ENCODE measurements at regions of chr20 and their contacts with region 1.

Region 1: GRCh38 chr20:25299806-25300205 is 51.9 kb downstream of the PYGB start:
- DNase-seq: no peak
- ATAC-seq: peak; percentile 11
- H3K4me3 ChIP-seq: no peak overlapping the region
- H3K27ac ChIP-seq: peak overlapping the region; percentile 78
- H3K4me1 ChIP-seq: peaks cover 70% of the 10 kb centered on the region
- H3K27me3 ChIP-seq: no peaks in the 10 kb centered on the region
- CTCF ChIP-seq: no peak

Region 2: DNA sequence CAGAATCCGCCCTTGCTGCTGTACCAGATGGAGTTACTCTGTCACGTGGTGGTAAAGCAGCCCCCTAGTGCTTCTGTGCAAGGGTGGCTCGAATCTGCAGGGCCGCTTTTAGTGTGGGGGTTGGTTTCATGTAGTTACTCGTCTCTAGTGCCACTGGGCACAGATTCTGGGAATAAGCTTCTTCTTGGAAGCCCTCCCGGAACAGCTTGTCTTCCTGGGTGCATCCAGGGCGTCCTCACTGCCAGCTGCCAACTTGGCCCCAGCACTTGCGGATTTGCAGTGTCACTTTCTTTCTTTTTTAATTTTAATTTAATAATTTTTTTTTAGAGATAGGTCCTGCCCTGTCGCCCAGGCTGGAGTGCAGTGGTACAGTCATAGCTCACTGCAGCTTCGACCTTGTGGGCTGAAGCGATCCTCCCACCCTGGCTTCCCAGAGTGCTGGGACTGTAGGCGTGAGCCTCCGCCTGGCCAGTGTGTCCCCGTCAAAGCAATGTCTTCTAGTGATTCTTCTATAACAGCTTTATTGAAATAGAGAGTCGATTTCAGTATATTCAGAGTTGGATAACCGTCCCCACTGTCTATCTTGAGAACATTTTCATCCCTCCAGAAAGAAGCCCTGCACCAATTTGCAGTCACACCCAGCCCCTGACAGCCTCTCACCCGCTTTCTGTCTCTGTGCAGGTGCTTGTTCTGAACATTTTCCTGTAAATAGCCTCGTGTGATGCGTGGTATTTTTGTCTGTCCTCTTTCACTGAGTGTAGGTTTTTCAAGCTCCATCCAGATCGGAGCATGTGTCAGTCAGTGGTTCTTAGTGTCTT is 26.1 kb before region 1 on chr20:
- CTCF ChIA-PET with region 1: no interaction called
- POLR2A ChIA-PET with region 1: interaction called, 13 read pairs
- in situ Hi-C with region 1: no loop called
- intact Hi-C with region 1: no loop called
- DNase-seq: no peak
- ATAC-seq: no peak
- H3K4me3 ChIP-seq: no peak overlapping the region
- H3K27ac ChIP-seq: no peak overlapping the region
- H3K4me1 ChIP-seq: no peaks in the 10 kb centered on the region
- H3K27me3 ChIP-seq: no peaks in the 10 kb centered on the region
- CTCF ChIP-seq: no peak

Measured in Panc1 (cell line).